ENCODE measurements at regions of chr4 and their contacts with region 1.

Region 1: DNA sequence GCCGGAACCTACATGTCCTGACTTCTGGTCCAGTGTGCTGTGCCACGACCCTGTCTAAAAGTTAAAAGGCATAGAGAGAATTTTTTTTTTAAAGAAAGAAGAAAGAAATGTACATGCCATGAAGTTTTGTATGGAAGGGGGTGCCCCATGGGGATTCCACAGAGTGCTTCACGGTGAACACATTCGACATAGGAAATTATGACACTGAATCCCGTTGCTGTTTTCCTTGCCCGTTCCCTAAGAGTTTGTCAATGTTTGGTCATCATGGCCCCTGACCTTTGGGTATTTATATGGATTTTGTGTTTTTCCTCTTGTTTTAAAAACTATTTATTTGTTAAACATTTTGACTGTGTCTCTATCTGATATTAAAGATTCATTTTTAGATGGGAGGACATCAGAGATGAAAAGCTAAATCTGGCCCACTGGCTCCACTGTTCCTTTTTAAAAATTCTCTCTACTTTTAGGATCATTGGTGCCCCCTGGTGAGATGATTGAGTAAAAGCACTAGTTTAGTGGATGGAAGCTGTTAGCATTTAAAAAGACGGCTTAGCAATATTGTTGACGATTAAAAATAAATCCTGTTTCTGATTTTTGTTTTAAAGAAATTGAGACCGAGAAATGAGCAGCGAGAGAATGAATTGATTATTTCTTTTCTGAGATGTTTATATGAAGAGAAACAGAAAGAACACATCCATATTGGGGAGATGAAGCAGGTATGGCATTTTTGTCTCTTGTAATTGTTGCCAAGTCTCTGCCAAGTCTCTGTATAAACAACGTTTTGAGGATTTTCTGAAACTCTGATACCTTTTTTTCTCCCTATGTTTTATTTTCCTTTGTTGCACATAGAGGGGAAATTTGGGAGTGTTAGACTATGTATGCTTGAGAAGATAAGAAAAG is 75.0 kb downstream of the PTTG2 start:
- DNase-seq: peak in 1 of 2 experiments; percentile 57
- H3K4me3 ChIP-seq: no peak overlapping the region
- H3K4me3 Mint-ChIP-seq: no peak overlapping the region
- H3K27ac Mint-ChIP-seq: no peak overlapping the region
- H3K4me1 ChIP-seq: no peaks in the 10 kb centered on the region
- H3K4me1 Mint-ChIP-seq: no peaks in the 10 kb centered on the region
- H3K27me3 ChIP-seq: no peaks in the 10 kb centered on the region
- H3K27me3 Mint-ChIP-seq: no peaks in the 10 kb centered on the region
- CTCF ChIP-seq: peak; percentile 54 to 61

Region 2: DNA sequence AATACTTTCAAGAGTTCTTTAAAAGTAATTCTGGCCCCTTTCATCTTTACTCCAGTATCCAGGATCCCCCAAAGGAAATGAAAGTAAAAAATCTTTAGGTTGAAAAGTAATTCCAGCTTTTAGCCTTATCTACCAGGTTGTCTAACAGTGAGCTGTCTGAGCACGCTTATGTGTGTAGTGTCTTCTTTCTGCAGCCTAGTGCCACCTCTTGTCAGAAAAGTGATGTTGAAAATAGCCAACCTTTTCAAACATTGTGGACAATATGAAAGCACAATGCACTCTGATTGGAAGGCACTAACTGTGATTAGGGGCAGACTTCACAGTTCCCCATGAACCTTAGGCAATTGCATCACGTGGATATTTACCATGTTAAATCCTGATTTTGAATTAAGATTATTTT is 441.1 kb before region 1 on chr4:
- CTCF ChIA-PET with region 1: no interaction called
- POLR2A ChIA-PET with region 1: no interaction called
- intact Hi-C with region 1: loop called (anchors 10 kb)
- DNase-seq: no peak
- H3K4me3 ChIP-seq: no peak overlapping the region
- H3K4me3 Mint-ChIP-seq: no peak overlapping the region
- H3K27ac Mint-ChIP-seq: no peak overlapping the region
- H3K4me1 ChIP-seq: peaks cover 39% of the 10 kb centered on the region
- H3K4me1 Mint-ChIP-seq: peaks cover 26% of the 10 kb centered on the region
- H3K27me3 ChIP-seq: no peaks in the 10 kb centered on the region
- H3K27me3 Mint-ChIP-seq: no peaks in the 10 kb centered on the region
- CTCF ChIP-seq: peak in 1 of 2 experiments; percentile 19

Region 3: GRCh38 chr4:37802068-37802666 is 233.1 kb before region 1 on chr4:
- CTCF ChIA-PET with region 1: interaction called, 5 read pairs
- POLR2A ChIA-PET with region 1: no interaction called
- intact Hi-C with region 1: loop called (anchors 1 kb)
- DNase-seq: peak; percentile 73 to 77
- H3K4me3 ChIP-seq: no peak overlapping the region
- H3K4me3 Mint-ChIP-seq: no peak overlapping the region
- H3K27ac Mint-ChIP-seq: no peak overlapping the region
- H3K4me1 ChIP-seq: no peaks in the 10 kb centered on the region
- H3K4me1 Mint-ChIP-seq: peaks cover 18% of the 10 kb centered on the region
- H3K27me3 ChIP-seq: no peaks in the 10 kb centered on the region
- H3K27me3 Mint-ChIP-seq: no peaks in the 10 kb centered on the region
- CTCF ChIP-seq: peak; percentile 59 to 80

Region 4: GRCh38 chr4:37891260-37892159 is 143.7 kb before region 1 on chr4:
- CTCF ChIA-PET with region 1: no interaction called
- POLR2A ChIA-PET with region 1: no interaction called
- intact Hi-C with region 1: loop called (anchors 5 kb)
- DNase-seq: peak in 1 of 2 experiments; percentile 47
- H3K4me3 ChIP-seq: peak overlapping the region; percentile 55
- H3K4me3 Mint-ChIP-seq: peak overlapping the region; percentile 52
- H3K27ac Mint-ChIP-seq: no peak overlapping the region
- H3K4me1 ChIP-seq: no peaks in the 10 kb centered on the region
- H3K4me1 Mint-ChIP-seq: no peaks in the 10 kb centered on the region
- H3K27me3 ChIP-seq: no peaks in the 10 kb centered on the region; the same call in 1 of the 2 replicates
- H3K27me3 Mint-ChIP-seq: peaks cover 16% of the 10 kb centered on the region
- CTCF ChIP-seq: no peak

Region 5: GRCh38 chr4:37936889-37937498 is 98.2 kb before region 1 on chr4:
- CTCF ChIA-PET with region 1: no interaction called
- POLR2A ChIA-PET with region 1: no interaction called
- intact Hi-C with region 1: loop called (anchors 1 kb)
- DNase-seq: no peak
- H3K4me3 ChIP-seq: no peak overlapping the region
- H3K4me3 Mint-ChIP-seq: no peak overlapping the region
- H3K27ac Mint-ChIP-seq: no peak overlapping the region
- H3K4me1 ChIP-seq: no peaks in the 10 kb centered on the region
- H3K4me1 Mint-ChIP-seq: no peaks in the 10 kb centered on the region
- H3K27me3 ChIP-seq: no peaks in the 10 kb centered on the region
- H3K27me3 Mint-ChIP-seq: peaks cover 5% of the 10 kb centered on the region
- CTCF ChIP-seq: peak in 1 of 2 experiments; percentile 21

Region 6: GRCh38 chr4:37977471-37978247 is 57.6 kb before region 1 on chr4:
- CTCF ChIA-PET with region 1: interaction called, 3 read pairs
- POLR2A ChIA-PET with region 1: no interaction called
- intact Hi-C with region 1: loop called (anchors 2 kb)
- DNase-seq: peak; percentile 51 to 65
- H3K4me3 ChIP-seq: peak overlapping the region; percentile 54
- H3K4me3 Mint-ChIP-seq: peak overlapping the region; percentile 71
- H3K27ac Mint-ChIP-seq: no peak overlapping the region
- H3K4me1 ChIP-seq: peaks cover 15% of the 10 kb centered on the region; the same call in 1 of the 2 replicates
- H3K4me1 Mint-ChIP-seq: peaks cover 12% of the 10 kb centered on the region
- H3K27me3 ChIP-seq: no peaks in the 10 kb centered on the region
- H3K27me3 Mint-ChIP-seq: no peaks in the 10 kb centered on the region
- CTCF ChIP-seq: peak; percentile 23 to 64

Region 7: DNA sequence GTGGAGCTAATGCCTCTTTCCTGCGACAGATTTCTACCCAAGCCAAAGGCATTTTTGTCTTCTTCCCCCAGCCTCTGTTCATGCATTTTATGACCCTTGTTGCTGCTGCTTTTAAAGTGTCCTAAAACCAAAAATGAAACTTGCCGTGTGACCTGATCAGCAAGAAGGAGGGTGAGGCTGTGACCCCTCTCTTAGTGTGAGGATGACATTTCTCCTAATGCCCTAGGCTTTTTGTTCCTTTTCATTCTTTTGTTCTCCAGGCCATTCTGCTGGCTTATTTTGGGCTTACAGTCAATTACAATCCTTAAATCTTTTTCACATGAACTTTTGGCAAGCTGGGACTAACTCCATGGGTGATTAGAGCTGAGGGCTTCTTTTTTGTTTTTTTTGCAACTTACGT is 40.7 kb before region 1 on chr4:
- CTCF ChIA-PET with region 1: no interaction called
- POLR2A ChIA-PET with region 1: no interaction called
- intact Hi-C with region 1: no loop called
- DNase-seq: no peak
- H3K4me3 ChIP-seq: no peak overlapping the region
- H3K4me3 Mint-ChIP-seq: no peak overlapping the region
- H3K27ac Mint-ChIP-seq: no peak overlapping the region
- H3K4me1 ChIP-seq: peaks cover 4% of the 10 kb centered on the region
- H3K4me1 Mint-ChIP-seq: peaks cover 14% of the 10 kb centered on the region
- H3K27me3 ChIP-seq: no peaks in the 10 kb centered on the region
- H3K27me3 Mint-ChIP-seq: no peaks in the 10 kb centered on the region
- CTCF ChIP-seq: no peak

Region 8: GRCh38 chr4:38008571-38009021 is 26.6 kb before region 1 on chr4:
- CTCF ChIA-PET with region 1: no interaction called
- POLR2A ChIA-PET with region 1: no interaction called
- intact Hi-C with region 1: no loop called
- DNase-seq: no peak
- H3K4me3 ChIP-seq: no peak overlapping the region
- H3K4me3 Mint-ChIP-seq: no peak overlapping the region
- H3K27ac Mint-ChIP-seq: no peak overlapping the region
- H3K4me1 ChIP-seq: no peaks in the 10 kb centered on the region; the same call in 1 of the 2 replicates
- H3K4me1 Mint-ChIP-seq: peaks cover 9% of the 10 kb centered on the region
- H3K27me3 ChIP-seq: no peaks in the 10 kb centered on the region
- H3K27me3 Mint-ChIP-seq: no peaks in the 10 kb centered on the region
- CTCF ChIP-seq: no peak

Region 9: GRCh38 chr4:38078590-38079421 is 43.6 kb after region 1 on chr4:
- CTCF ChIA-PET with region 1: no interaction called
- POLR2A ChIA-PET with region 1: no interaction called
- intact Hi-C with region 1: no loop called
- DNase-seq: no peak
- H3K4me3 ChIP-seq: no peak overlapping the region
- H3K4me3 Mint-ChIP-seq: no peak overlapping the region
- H3K27ac Mint-ChIP-seq: peak overlapping the region; percentile 54
- H3K4me1 ChIP-seq: peaks cover 25% of the 10 kb centered on the region
- H3K4me1 Mint-ChIP-seq: peaks cover 27% of the 10 kb centered on the region
- H3K27me3 ChIP-seq: no peaks in the 10 kb centered on the region
- H3K27me3 Mint-ChIP-seq: no peaks in the 10 kb centered on the region
- CTCF ChIP-seq: no peak

Region 10: DNA sequence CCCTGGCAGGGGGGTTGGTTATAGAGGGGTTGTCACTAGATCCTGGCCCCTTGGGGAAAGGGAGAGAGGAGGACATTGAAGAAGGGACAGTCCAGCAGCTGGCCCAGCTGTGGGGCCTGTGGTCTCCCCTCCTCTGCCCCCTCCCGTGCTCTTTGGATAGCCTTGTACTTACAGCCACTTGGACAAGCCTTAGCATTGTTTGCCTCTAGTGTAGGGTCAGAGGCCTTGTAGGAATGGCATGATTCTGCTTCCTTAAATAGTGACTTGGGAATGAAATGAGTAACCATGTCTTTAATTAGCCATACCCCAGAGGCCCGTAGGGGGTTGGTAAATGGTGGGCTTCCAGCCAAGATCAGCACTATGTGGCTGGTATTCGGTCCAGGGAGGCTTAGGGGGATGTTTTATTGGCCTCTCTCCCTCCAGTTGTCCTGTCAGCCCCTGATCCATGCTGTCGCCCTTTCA is 155.5 kb after region 1 on chr4:
- CTCF ChIA-PET with region 1: no interaction called
- POLR2A ChIA-PET with region 1: no interaction called
- intact Hi-C with region 1: no loop called
- DNase-seq: no peak
- H3K4me3 ChIP-seq: no peak overlapping the region
- H3K4me3 Mint-ChIP-seq: no peak overlapping the region
- H3K27ac Mint-ChIP-seq: no peak overlapping the region
- H3K4me1 ChIP-seq: no peaks in the 10 kb centered on the region
- H3K4me1 Mint-ChIP-seq: no peaks in the 10 kb centered on the region
- H3K27me3 ChIP-seq: no peaks in the 10 kb centered on the region
- H3K27me3 Mint-ChIP-seq: no peaks in the 10 kb centered on the region
- CTCF ChIP-seq: no peak